AG04449 (cell line): ENCODE measurements at regions of chr10 and their contacts with region 1.

Region 1: GRCh38 chr10:113385021-113385999 is 167.5 kb upstream of the HABP2 start:
- DNase-seq: peak; percentile 59
- H3K4me3 ChIP-seq: no peak overlapping the region
- CTCF ChIP-seq: peak; percentile 88

Region 2: DNA sequence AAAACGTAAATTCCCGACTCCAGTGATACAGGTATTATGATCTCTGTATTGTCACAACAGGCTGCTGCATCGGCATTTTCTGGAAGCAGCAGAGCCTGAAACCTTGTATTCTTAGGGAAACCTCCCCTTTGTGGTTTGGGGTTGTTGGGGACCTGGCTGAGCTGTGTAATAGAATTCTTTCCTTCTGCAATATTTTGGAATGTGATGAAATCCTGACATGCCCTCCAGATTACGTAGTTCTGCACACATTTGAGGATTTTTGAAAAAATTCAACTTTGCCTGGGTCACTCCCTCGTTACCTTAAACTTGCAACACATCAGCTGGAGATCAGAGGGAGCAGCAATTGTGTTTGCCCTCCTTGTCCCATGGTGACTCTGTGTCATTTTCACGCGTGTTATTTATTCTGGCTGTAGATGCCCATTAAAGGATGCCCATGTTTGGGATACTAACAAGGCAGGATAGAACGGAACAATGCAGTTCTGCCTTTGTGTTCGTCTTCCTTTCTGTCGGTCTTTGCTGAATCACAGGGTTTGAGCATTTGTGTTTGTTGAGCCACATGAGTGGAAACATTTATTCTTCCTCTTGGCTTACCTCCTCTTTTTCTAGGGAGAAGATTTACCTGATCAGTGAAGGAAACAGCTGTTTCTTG is 253.6 kb before region 1 on chr10:
- CTCF ChIA-PET with region 1: interaction called, 14 read pairs
- POLR2A ChIA-PET with region 1: no interaction called
- DNase-seq: peak; percentile 55
- H3K4me3 ChIP-seq: no peak overlapping the region
- CTCF ChIP-seq: no peak

Region 3: DNA sequence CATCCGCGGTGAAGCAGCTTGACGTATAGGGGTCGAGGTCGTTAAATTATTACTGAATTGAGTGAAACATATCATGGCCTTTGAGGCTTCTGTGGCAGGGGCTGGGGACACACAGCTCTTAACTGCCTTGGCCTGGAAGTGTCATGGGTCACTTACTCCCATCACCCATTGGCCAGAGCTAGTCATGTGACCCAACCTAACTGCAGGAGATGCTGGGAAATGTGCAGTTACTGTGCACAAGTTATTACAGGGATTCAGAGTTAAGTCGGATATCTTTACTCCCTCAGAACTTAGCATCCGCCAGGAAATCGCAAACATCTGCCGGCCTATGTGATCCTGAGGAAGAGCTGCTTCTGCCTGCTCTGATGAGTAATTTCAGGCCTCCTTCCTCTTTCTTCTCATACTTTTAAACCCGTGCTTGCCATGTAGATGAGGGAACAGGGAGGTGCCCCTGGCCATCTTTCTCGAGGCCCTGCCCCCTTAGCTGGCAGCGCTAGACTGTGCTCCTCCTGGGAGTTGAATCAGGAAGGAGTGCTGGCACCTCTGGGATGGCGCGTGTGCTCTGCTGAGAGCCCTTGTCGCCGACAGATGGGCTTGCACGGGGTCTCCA is 231.7 kb before region 1 on chr10:
- CTCF ChIA-PET with region 1: interaction called, 13 read pairs
- POLR2A ChIA-PET with region 1: no interaction called
- DNase-seq: no peak
- H3K4me3 ChIP-seq: no peak overlapping the region
- CTCF ChIP-seq: no peak

Region 4: GRCh38 chr10:113216102-113216501 is 169.2 kb before region 1 on chr10:
- CTCF ChIA-PET with region 1: interaction called, 16 read pairs
- POLR2A ChIA-PET with region 1: no interaction called
- DNase-seq: no peak
- H3K4me3 ChIP-seq: no peak overlapping the region
- CTCF ChIP-seq: no peak

Region 5: DNA sequence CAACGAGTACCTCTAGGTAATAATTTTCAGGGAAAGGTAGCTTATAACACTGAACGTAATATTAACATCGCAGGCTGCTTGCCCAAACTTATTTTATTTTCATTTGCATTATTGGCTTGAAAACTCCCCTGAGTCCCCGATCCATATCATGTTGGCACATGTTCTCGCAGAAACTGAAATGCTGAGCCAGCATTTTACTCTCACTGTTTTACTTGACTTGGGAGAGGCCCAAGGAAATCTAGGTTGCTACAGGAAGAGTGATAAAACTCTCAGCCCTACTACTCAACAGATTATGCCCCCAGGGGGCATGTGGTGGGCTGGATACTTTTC is 16.0 kb before region 1 on chr10:
- CTCF ChIA-PET with region 1: no interaction called
- POLR2A ChIA-PET with region 1: no interaction called
- DNase-seq: no peak
- H3K4me3 ChIP-seq: no peak overlapping the region
- CTCF ChIP-seq: no peak